Activated B cell treated with CpG ODN at 0.5 μM for 24 hours (primary cell): ENCODE measurements at regions of chr1 and their contacts with region 1.

Region 1: GRCh38 chr1:107142140-107142542 is 1.3 kb downstream of the NTNG1 start:
- DNase-seq: no peak
- ATAC-seq: no peak
- H3K4me3 Mint-ChIP-seq: peak overlapping the region; percentile 86
- H3K27ac Mint-ChIP-seq: peak overlapping the region; percentile 68
- H3K4me1 Mint-ChIP-seq: peaks cover 23% of the 10 kb centered on the region
- H3K27me3 Mint-ChIP-seq: peaks cover 15% of the 10 kb centered on the region
- CTCF ChIP-seq: peak; percentile 99

Region 2: DNA sequence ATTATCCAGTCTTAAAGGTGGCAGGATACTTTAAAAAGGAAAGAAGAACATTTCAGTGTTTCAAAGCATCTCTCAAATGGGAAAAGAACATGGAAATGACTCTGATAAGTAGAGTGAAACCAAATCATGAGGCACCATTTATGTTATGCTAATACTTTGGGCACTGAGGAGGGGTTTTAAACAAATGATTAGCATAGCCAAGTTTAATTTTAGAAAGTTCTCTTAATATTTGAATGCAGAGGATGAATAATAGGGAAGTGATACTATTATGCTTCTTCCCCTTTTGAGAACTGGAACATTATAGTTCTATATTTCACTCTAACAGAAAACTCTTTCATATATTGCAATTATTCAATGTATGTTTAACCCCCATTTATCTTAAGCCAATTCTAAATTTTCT is 1267.5 kb before region 1 on chr1:
- CTCF ChIA-PET with region 1: no interaction called
- POLR2A ChIA-PET with region 1: no interaction called
- intact Hi-C with region 1: loop called (anchors 5 kb)
- DNase-seq: no peak
- ATAC-seq: peak; percentile 87
- H3K4me3 Mint-ChIP-seq: peak overlapping the region; percentile 58
- H3K27ac Mint-ChIP-seq: peak overlapping the region; percentile 88
- H3K4me1 Mint-ChIP-seq: peaks cover 36% of the 10 kb centered on the region
- H3K27me3 Mint-ChIP-seq: no peaks in the 10 kb centered on the region
- CTCF ChIP-seq: no peak

Region 3: GRCh38 chr1:106022312-106022902 is 1119.7 kb before region 1 on chr1:
- CTCF ChIA-PET with region 1: interaction called, 3 read pairs
- POLR2A ChIA-PET with region 1: no interaction called
- intact Hi-C with region 1: loop called (anchors 1 kb)
- DNase-seq: no peak
- ATAC-seq: no peak
- H3K4me3 Mint-ChIP-seq: no peak overlapping the region
- H3K27ac Mint-ChIP-seq: no peak overlapping the region
- H3K4me1 Mint-ChIP-seq: no peaks in the 10 kb centered on the region
- H3K27me3 Mint-ChIP-seq: no peaks in the 10 kb centered on the region
- CTCF ChIP-seq: no peak

Region 4: DNA sequence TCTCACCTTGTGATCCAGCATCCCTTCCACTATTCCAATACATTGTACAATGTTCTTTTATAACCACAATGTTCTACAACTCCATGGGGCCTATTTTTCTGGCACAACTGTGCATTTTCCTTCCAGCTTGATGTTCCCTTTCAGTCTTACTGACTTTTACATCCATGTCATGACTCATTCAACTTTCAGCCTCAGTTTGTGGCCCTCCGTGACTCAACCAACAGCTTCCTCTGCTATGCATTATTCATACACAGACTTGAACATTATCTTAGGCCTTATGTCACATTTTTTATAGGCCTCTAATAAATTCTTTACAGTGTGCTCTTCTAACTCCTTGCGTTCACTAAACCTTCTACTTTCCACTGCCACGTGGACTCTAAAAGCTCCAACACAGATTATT is 205.0 kb before region 1 on chr1:
- CTCF ChIA-PET with region 1: no interaction called
- POLR2A ChIA-PET with region 1: no interaction called
- intact Hi-C with region 1: no loop called
- DNase-seq: no peak
- ATAC-seq: no peak
- H3K4me3 Mint-ChIP-seq: no peak overlapping the region
- H3K27ac Mint-ChIP-seq: no peak overlapping the region
- H3K4me1 Mint-ChIP-seq: no peaks in the 10 kb centered on the region
- H3K27me3 Mint-ChIP-seq: peaks cover 3% of the 10 kb centered on the region
- CTCF ChIP-seq: no peak

Region 5: DNA sequence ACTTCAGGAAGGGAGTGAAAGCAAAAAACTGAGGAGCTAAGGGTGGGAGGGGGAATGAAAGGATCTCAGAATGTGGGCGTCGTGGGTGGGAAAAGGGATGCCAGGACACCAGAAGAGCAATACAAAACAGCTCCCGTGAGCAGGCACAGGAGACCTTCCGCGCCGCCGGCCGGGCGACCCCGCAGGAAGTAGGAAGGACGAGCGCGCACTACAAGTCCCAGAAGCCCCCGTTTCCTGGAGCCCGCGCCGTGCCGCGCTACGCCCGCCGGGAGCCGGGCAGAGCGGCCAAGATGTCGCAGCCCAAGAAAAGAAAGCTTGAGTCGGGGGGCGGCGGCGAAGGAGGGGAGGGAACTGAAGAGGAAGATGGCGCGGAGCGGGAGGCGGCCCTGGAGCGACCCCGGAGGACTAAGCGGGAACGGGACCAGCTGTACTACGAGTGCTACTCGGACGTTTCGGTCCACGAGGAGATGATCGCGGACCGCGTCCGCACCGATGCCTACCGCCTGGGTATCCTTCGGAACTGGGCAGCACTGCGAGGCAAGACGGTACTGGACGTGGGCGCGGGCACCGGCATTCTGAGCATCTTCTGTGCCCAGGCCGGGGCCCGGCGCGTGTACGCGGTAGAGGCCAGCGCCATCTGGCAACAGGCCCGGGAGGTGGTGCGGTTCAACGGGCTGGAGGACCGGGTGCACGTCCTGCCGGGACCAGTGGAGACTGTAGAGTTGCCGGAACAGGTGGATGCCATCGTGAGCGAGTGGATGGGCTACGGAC is 85.5 kb before region 1 on chr1 and contains the start of gene PRMT6:
- CTCF ChIA-PET with region 1: interaction called, 5 read pairs
- POLR2A ChIA-PET with region 1: interaction called, 12 read pairs
- intact Hi-C with region 1: loop called (anchors 1 kb)
- DNase-seq: peak; percentile 75
- ATAC-seq: peak; percentile 94
- H3K4me3 Mint-ChIP-seq: peak within 1 kb of the TSS; percentile 94
- H3K27ac Mint-ChIP-seq: peak within 1 kb of the TSS; percentile 90
- H3K4me1 Mint-ChIP-seq: peaks cover 31% of the 10 kb centered on the region
- H3K27me3 Mint-ChIP-seq: no peaks in the 10 kb centered on the region
- CTCF ChIP-seq: no peak
- total RNA-seq, gene PRMT6: 19.8 and 22.3 TPM in 2 replicates